ENCODE measurements at regions of chr5 and their contacts with region 1.

Region 1: GRCh38 chr5:135693371-135693955 is 114.7 kb upstream of the CXCL14 start:
- DNase-seq: no peak

Region 2: GRCh38 chr5:134708301-134708700 is 985.2 kb before region 1 on chr5:
- intact Hi-C with region 1: no loop called
- DNase-seq: no peak

Region 3: DNA sequence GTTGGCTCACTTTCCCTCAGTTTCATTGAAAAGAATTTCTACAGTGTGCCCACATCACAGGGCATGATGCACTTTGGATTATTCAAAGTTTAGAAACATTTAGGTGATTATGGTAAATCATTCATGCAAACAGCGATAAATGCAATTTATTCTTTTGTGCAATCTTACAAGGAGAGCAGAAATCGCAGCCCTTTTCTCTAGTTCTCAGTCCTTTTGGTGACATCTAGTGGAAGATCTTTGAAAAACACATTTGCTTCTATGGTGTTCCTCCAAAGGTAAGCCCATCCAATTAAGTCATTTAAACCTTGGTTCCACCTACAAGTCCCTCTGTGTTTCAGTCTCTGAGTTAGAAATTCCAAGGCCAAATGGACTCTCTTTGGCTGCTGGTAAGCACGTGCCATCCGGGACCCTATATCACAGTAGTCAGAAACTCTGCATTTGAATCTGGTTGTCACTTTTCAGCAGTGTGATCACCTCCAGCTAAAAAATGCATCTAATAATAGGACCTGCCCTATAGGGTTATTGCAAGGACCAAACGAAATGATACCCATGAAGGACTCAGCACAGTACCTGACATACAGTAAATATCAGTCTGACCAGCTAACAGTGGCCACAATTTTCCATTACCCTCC is 360.8 kb before region 1 on chr5:
- intact Hi-C with region 1: no loop called
- DNase-seq: no peak

Region 4: DNA sequence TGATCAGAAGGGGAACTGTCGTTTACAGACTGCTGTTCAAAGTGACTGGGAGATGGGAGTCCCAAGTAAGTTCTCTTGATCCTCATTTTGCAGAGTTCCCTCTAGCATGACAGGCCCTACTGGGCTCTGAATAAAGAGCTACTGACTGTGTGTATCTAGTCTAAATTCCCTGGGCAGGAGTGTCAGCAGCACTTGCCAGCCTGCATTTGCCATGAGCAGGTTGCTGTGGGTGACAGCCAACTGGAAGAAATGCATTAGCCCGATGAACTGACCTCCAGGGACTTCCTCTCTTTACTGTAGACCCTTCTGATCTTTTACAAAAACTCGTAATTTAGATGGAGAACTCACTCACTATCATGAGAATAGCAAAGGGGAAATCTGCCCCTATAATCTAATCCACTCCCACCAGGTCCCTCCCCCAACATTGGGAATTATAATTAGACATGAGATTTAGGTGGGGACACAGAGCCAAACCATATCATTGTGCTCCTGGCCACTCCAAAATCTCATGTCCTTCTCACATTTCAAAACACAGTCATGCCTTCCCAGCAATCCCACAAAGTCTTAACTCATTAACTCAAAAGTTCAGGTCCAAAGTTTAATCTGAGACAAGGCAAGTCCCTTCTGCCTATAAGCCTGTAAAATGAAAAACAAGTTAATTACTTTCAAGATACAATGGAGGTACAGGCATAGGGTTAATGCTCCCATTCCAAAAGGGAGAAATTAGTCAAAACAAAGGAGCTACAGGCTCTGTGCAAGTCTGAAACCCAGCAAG is 35.7 kb before region 1 on chr5:
- intact Hi-C with region 1: loop called in 1 of 2 experiments (anchors 2 kb)
- DNase-seq: no peak

Region 5: DNA sequence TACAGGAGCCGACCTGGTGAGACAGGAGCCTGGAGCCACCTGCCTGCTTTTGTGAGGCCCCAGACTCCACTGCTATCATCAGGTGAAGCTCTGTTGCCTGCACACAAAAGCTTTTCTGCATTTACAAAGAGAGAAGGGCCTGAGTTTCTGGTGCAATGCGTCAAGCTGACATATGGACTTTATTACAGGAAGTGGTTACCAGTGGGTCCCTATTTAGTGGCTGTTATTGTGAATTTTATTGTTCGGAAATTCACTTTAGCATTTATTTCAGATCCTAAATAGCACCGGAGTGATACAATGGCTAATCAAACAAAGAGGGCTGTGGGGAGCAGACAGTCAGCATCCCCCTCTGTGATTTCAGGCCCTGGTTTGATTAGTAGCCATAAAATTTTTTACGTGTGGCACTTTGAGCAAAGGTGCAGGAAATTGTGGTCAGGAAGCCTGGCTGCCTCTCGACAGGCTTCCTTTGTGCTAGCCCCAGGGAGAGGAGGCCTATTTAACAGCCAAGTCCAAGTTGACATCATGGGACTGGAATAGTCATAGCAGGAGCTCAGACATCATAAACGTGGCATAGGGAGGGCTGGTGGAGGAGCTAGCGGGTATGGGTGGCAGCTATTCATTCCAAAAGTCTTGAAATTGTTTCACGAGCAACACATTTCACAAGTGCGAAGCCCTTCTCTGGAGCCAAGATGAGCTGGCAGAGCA is 343.7 kb after region 1 on chr5:
- intact Hi-C with region 1: no loop called
- DNase-seq: peak; percentile 22